ENCODE measurements at regions of chr1 and their contacts with region 1.

Region 1: GRCh38 chr1:151281969-151282882 is at the start of gene ZNF687:
- DNase-seq: peak; percentile 99
- ATAC-seq: peak; percentile 86
- H3K4me3 ChIP-seq: peak within 1 kb of the TSS; percentile 91 to 100 (median 97)
- H3K4me3 Mint-ChIP-seq: peak within 1 kb of the TSS; percentile 98
- H3K27ac ChIP-seq: peak within 1 kb of the TSS; percentile 95 to 96
- H3K27ac Mint-ChIP-seq: peak within 1 kb of the TSS; percentile 96
- H3K4me1 ChIP-seq: peaks cover 24 to 37% of the 10 kb centered on the region in 2 donors
- H3K4me1 Mint-ChIP-seq: peaks cover 45% of the 10 kb centered on the region
- H3K27me3 ChIP-seq: no peaks in the 10 kb centered on the region
- H3K27me3 Mint-ChIP-seq: no peaks in the 10 kb centered on the region
- CTCF ChIP-seq: no peak
- total RNA-seq, gene ZNF687: 49.6 and 54.0 TPM in 2 replicates

Region 2: DNA sequence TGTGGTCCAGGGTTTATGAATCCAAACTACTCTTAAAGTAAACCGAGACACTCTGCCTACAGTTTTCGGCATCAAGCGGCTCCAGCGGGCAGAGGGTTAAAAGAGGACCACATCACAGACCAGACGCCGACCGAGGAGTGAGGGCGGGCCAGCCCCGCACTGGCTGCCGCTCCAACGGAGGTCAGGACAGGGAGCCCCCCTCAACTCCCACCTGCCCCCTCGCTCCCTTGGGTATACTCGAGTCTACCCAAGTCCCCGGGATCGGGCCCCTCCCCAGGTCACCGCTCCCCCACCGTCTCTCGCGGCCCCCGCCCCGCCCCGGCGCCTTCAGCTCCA is 406.1 kb before region 1 on chr1:
- CTCF ChIA-PET with region 1: no interaction called
- POLR2A ChIA-PET with region 1: no interaction called
- intact Hi-C with region 1: loop called (anchors 2 kb)
- DNase-seq: no peak
- ATAC-seq: no peak
- H3K4me3 ChIP-seq: peak overlapping the region; percentile 72 to 87 (median 84)
- H3K4me3 Mint-ChIP-seq: peak overlapping the region; percentile 88
- H3K27ac ChIP-seq: peak overlapping the region; percentile 64 to 80
- H3K27ac Mint-ChIP-seq: peak overlapping the region; percentile 90
- H3K4me1 ChIP-seq: peaks cover 20% of the 10 kb centered on the region in 2 donors
- H3K4me1 Mint-ChIP-seq: peaks cover 32% of the 10 kb centered on the region
- H3K27me3 ChIP-seq: no peaks in the 10 kb centered on the region
- H3K27me3 Mint-ChIP-seq: no peaks in the 10 kb centered on the region
- CTCF ChIP-seq: no peak

Region 3: DNA sequence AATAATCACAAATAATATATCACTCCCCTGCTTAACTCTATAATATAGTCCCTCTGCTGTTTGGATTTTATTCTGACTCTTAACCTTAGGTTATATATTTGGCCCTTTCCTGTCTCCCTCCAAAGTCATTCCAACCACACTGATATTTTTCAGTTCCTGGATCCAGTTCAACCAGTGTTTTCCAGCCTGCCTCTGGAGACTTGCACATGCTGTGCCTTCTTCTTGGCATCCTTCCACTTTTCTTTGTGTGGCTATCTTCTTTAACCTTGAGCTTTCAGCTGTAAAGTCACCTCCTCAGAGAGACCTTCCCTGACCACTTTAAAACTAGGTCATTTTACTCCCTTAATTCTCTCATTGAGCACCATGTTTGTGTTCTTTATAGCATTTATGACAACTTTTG is 326.9 kb before region 1 on chr1:
- CTCF ChIA-PET with region 1: no interaction called
- POLR2A ChIA-PET with region 1: no interaction called
- intact Hi-C with region 1: no loop called
- DNase-seq: no peak
- ATAC-seq: no peak
- H3K4me3 ChIP-seq: no peak overlapping the region
- H3K4me3 Mint-ChIP-seq: no peak overlapping the region
- H3K27ac ChIP-seq: no peak overlapping the region
- H3K27ac Mint-ChIP-seq: no peak overlapping the region
- H3K4me1 ChIP-seq: no peaks in the 10 kb centered on the region
- H3K4me1 Mint-ChIP-seq: no peaks in the 10 kb centered on the region
- H3K27me3 ChIP-seq: no peaks in the 10 kb centered on the region
- H3K27me3 Mint-ChIP-seq: no peaks in the 10 kb centered on the region
- CTCF ChIP-seq: no peak

Region 4: GRCh38 chr1:151156515-151156819 is 125.8 kb before region 1 on chr1 and contains the start of gene TNFAIP8L2:
- CTCF ChIA-PET with region 1: no interaction called
- POLR2A ChIA-PET with region 1: no interaction called
- intact Hi-C with region 1: loop called (anchors 2 kb)
- DNase-seq: peak; percentile 77
- ATAC-seq: peak; percentile 85
- H3K4me3 ChIP-seq: peak within 1 kb of the TSS; percentile 72 to 98 (median 72)
- H3K4me3 Mint-ChIP-seq: peak within 1 kb of the TSS; percentile 99
- H3K27ac ChIP-seq: peak within 1 kb of the TSS; percentile 29 to 79
- H3K27ac Mint-ChIP-seq: peak within 1 kb of the TSS; percentile 97
- H3K4me1 ChIP-seq: peaks cover 30 to 37% of the 10 kb centered on the region in 2 donors
- H3K4me1 Mint-ChIP-seq: peaks cover 41% of the 10 kb centered on the region
- H3K27me3 ChIP-seq: no peaks in the 10 kb centered on the region
- H3K27me3 Mint-ChIP-seq: no peaks in the 10 kb centered on the region
- CTCF ChIP-seq: no peak
- total RNA-seq, gene TNFAIP8L2: 14.9 and 17.6 TPM in 2 replicates

Region 5: GRCh38 chr1:151198255-151199127 is 83.7 kb before region 1 on chr1 and contains the start of gene PIP5K1A:
- CTCF ChIA-PET with region 1: interaction called, 3 read pairs
- POLR2A ChIA-PET with region 1: no interaction called
- intact Hi-C with region 1: loop called (anchors 2 kb)
- DNase-seq: peak; percentile 98
- ATAC-seq: peak; percentile 98
- H3K4me3 ChIP-seq: peak within 1 kb of the TSS; percentile 82 to 96 (median 95)
- H3K4me3 Mint-ChIP-seq: peak within 1 kb of the TSS; percentile 98
- H3K27ac ChIP-seq: peak within 1 kb of the TSS; percentile 87 to 90
- H3K27ac Mint-ChIP-seq: peak within 1 kb of the TSS; percentile 94
- H3K4me1 ChIP-seq: peaks cover 21 to 29% of the 10 kb centered on the region in 2 donors
- H3K4me1 Mint-ChIP-seq: peaks cover 47% of the 10 kb centered on the region
- H3K27me3 ChIP-seq: peaks cover 0 to 2% (median 0%) of the 10 kb centered on the region in 4 experiments
- H3K27me3 Mint-ChIP-seq: no peaks in the 10 kb centered on the region
- CTCF ChIP-seq: no peak
- total RNA-seq, gene PIP5K1A: 76.1 and 78.4 TPM in 2 replicates

Region 6: DNA sequence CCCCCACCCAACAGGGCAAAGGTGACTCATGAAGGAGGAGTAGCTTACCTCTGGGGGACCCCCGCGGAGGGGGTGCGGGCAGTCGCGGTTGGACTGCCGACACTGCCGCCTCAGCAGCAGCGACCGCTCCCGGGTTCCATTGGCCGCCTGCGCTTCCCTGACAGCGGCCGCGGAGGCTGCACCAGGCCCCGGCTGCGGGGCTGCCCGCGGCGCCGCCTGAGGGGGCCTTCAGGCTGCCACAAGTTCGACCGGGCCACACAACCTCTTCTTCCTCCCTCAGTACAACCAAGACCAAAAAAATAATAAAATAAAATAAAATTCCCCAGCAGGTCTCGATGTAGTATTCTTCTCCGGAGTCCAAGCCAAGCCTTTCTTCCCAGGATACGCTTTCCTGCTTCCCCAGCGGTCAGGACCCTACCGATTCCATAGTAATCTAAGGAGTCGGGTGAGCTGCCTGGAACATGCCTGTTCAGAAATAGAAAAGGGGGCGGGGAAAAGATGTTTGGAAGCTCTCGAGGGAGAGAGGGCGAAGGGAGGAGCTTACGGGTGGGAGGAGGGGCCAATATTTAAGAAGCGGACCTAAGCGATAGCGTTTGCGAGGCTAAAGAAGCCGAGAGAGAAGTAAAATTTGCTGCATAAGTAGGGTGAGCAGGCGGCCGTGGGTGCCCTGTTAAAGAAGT is 45.1 kb after region 1 on chr1 and contains the start of gene PI4KB:
- CTCF ChIA-PET with region 1: interaction called, 5 read pairs
- POLR2A ChIA-PET with region 1: interaction called, 6 read pairs
- intact Hi-C with region 1: loop called (anchors 1 kb)
- DNase-seq: peak; percentile 97
- ATAC-seq: peak; percentile 93
- H3K4me3 ChIP-seq: peak within 1 kb of the TSS; percentile 72 to 99 (median 90)
- H3K4me3 Mint-ChIP-seq: peak within 1 kb of the TSS; percentile 93
- H3K27ac ChIP-seq: peak within 1 kb of the TSS; percentile 87 to 89
- H3K27ac Mint-ChIP-seq: peak within 1 kb of the TSS; percentile 96
- H3K4me1 ChIP-seq: peaks cover 21 to 26% of the 10 kb centered on the region in 2 donors
- H3K4me1 Mint-ChIP-seq: peaks cover 40% of the 10 kb centered on the region
- H3K27me3 ChIP-seq: no peaks in the 10 kb centered on the region
- H3K27me3 Mint-ChIP-seq: no peaks in the 10 kb centered on the region
- CTCF ChIP-seq: no peak
- total RNA-seq, gene PI4KB: 110 TPM in 2 replicates

Region 7: GRCh38 chr1:151346769-151347522 is 64.7 kb after region 1 on chr1 and contains the start of gene RFX5:
- CTCF ChIA-PET with region 1: interaction called, 3 read pairs
- POLR2A ChIA-PET with region 1: interaction called, 4 read pairs
- intact Hi-C with region 1: loop called (anchors 1 kb)
- DNase-seq: peak; percentile 99
- ATAC-seq: peak; percentile 91
- H3K4me3 ChIP-seq: peak within 1 kb of the TSS; percentile 81 to 95 (median 85)
- H3K4me3 Mint-ChIP-seq: peak within 1 kb of the TSS; percentile 92
- H3K27ac ChIP-seq: peak within 1 kb of the TSS; percentile 98 to 99
- H3K27ac Mint-ChIP-seq: peak within 1 kb of the TSS; percentile 97
- H3K4me1 ChIP-seq: peaks cover 34 to 44% of the 10 kb centered on the region in 2 donors
- H3K4me1 Mint-ChIP-seq: peaks cover 49% of the 10 kb centered on the region
- H3K27me3 ChIP-seq: no peaks in the 10 kb centered on the region
- H3K27me3 Mint-ChIP-seq: no peaks in the 10 kb centered on the region
- CTCF ChIP-seq: no peak
- total RNA-seq, gene RFX5: 207 and 208 TPM in 2 replicates

Region 8: GRCh38 chr1:151372061-151372934 is 90.1 kb after region 1 on chr1 and contains the start of gene SELENBP1:
- CTCF ChIA-PET with region 1: no interaction called
- POLR2A ChIA-PET with region 1: no interaction called
- intact Hi-C with region 1: no loop called
- DNase-seq: no peak
- ATAC-seq: no peak
- H3K4me3 ChIP-seq: no peak within 1 kb of the TSS
- H3K4me3 Mint-ChIP-seq: no peak within 1 kb of the TSS
- H3K27ac ChIP-seq: no peak within 1 kb of the TSS
- H3K27ac Mint-ChIP-seq: no peak within 1 kb of the TSS
- H3K4me1 ChIP-seq: peaks cover 0 to 4% of the 10 kb centered on the region in 2 donors
- H3K4me1 Mint-ChIP-seq: no peaks in the 10 kb centered on the region
- H3K27me3 ChIP-seq: no peaks in the 10 kb centered on the region
- H3K27me3 Mint-ChIP-seq: no peaks in the 10 kb centered on the region
- CTCF ChIP-seq: no peak
- total RNA-seq, gene SELENBP1: 0.22 and 0.37 TPM in 2 replicates

Region 9: GRCh38 chr1:151839457-151840405 is 557.5 kb after region 1 on chr1 and contains the start of gene C2CD4D:
- CTCF ChIA-PET with region 1: no interaction called
- POLR2A ChIA-PET with region 1: no interaction called
- intact Hi-C with region 1: loop called (anchors 5 kb)
- DNase-seq: peak; percentile 78
- ATAC-seq: peak; percentile 53
- H3K4me3 ChIP-seq: peak within 1 kb of the TSS in 4 of 5 experiments; percentile 36 to 56 (median 44)
- H3K4me3 Mint-ChIP-seq: peak within 1 kb of the TSS; percentile 87
- H3K27ac ChIP-seq: no peak within 1 kb of the TSS
- H3K27ac Mint-ChIP-seq: peak within 1 kb of the TSS; percentile 81
- H3K4me1 ChIP-seq: peaks cover 36 to 41% of the 10 kb centered on the region in 2 donors
- H3K4me1 Mint-ChIP-seq: peaks cover 38% of the 10 kb centered on the region
- H3K27me3 ChIP-seq: peaks cover 0 to 20% (median 7%) of the 10 kb centered on the region in 4 experiments
- H3K27me3 Mint-ChIP-seq: peaks cover 10% of the 10 kb centered on the region
- CTCF ChIP-seq: no peak
- total RNA-seq, gene C2CD4D: not detected in 2 replicates

Measured in B cell (primary cell).